HepG2 (cell line): ENCODE measurements at regions of chr4 and their contacts with region 1.

Region 1: GRCh38 chr4:98260579-98261290 is 449 bp upstream of the RAP1GDS1 start:
- DNase-seq: peak; percentile 89
- ATAC-seq: peak; percentile 90
- H3K4me3 ChIP-seq: peak overlapping the region; percentile 72 to 84 (median 73)
- H3K27ac ChIP-seq: peak overlapping the region; percentile 95
- H3K4me1 ChIP-seq: peaks cover 27% of the 10 kb centered on the region
- H3K27me3 ChIP-seq: no peaks in the 10 kb centered on the region; a peak in 1 of 5 replicates
- CTCF ChIP-seq: peak; percentile 22
- EP300 ChIP-seq: no peak
- POLR2A ChIP-seq: peak; percentile 80 to 86
- RAD21 ChIP-seq: peak; percentile 12; the same call in 1 of the 2 replicates

Region 2: DNA sequence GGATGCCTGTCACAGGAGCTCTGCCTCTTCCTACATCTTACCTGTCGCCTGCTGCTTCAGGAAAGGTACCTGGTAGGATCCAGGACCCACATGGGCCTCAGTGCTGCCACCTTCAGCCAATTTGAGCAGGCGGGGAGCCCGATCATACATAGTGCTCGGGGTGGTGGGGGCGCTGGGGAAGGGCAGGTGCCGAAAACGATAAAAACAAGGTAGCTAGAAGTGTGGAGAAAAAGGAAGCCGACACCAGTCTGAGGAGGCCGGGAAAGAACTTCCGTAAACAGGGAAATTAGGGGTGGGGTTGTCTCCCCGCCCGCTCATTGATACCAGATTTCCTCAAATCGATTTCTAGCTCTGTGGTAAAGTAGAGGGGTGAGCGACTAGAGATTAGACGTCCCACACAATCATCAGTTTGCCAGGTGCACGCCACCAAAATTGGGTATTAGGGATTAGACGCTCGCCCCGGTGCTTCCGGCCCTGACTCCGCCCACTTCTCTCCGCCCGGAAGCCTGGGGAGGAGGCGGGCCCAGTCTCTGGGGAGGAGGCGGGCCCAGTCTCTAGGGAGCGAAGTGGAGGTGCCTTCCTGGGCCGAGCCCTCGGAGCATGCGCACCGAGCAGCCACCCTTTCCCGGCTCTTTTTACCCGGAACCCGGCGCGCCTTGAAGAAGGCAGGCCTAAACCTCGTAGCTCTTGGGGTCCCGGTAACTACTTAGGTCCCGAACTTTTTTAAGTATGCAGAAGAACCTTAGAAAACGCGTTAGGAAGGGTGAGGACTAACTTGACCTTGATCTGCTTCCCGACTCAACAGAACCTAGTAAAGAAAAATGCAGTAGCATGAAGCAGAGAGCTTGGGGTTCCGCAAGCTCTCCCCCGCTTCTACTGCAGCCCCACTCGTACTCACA is 117.5 kb before region 1 on chr4 and contains the start of gene STPG2:
- CTCF ChIA-PET with region 1: no interaction called
- POLR2A ChIA-PET with region 1: interaction called, 31 read pairs
- in situ Hi-C with region 1: no loop called
- intact Hi-C with region 1: loop called (anchors 5 kb)
- DNase-seq: peak; percentile 79
- ATAC-seq: peak; percentile 100
- H3K4me3 ChIP-seq: peak within 1 kb of the TSS; percentile 75 to 83 (median 76)
- H3K27ac ChIP-seq: peak within 1 kb of the TSS; percentile 35
- H3K4me1 ChIP-seq: peaks cover 13% of the 10 kb centered on the region
- H3K27me3 ChIP-seq: no peaks in the 10 kb centered on the region; a peak in 1 of 5 replicates
- CTCF ChIP-seq: peak; percentile 52
- EP300 ChIP-seq: no peak
- POLR2A ChIP-seq: peak in 1 of 2 experiments; percentile 30; a peak in 1 of 4 replicates
- RAD21 ChIP-seq: no peak
- total RNA-seq, gene STPG2: 0.07 TPM in 1 of 2 replicates, not detected in the other

Region 3: GRCh38 chr4:98275145-98275544 is 14.4 kb after region 1 on chr4:
- CTCF ChIA-PET with region 1: no interaction called
- POLR2A ChIA-PET with region 1: interaction called, 10 read pairs
- in situ Hi-C with region 1: no loop called
- intact Hi-C with region 1: no loop called
- DNase-seq: no peak
- ATAC-seq: no peak
- H3K4me3 ChIP-seq: no peak overlapping the region
- H3K27ac ChIP-seq: no peak overlapping the region
- H3K4me1 ChIP-seq: peaks cover 6% of the 10 kb centered on the region; the same call in 1 of the 2 replicates
- H3K27me3 ChIP-seq: no peaks in the 10 kb centered on the region
- CTCF ChIP-seq: no peak
- EP300 ChIP-seq: no peak
- POLR2A ChIP-seq: no peak
- RAD21 ChIP-seq: no peak

Region 4: GRCh38 chr4:98284640-98285046 is 23.9 kb after region 1 on chr4:
- CTCF ChIA-PET with region 1: no interaction called
- POLR2A ChIA-PET with region 1: interaction called, 27 read pairs
- in situ Hi-C with region 1: no loop called
- intact Hi-C with region 1: no loop called
- DNase-seq: no peak
- ATAC-seq: no peak
- H3K4me3 ChIP-seq: no peak overlapping the region
- H3K27ac ChIP-seq: peak overlapping the region; percentile 17
- H3K4me1 ChIP-seq: peaks cover 27% of the 10 kb centered on the region
- H3K27me3 ChIP-seq: no peaks in the 10 kb centered on the region
- CTCF ChIP-seq: no peak
- EP300 ChIP-seq: no peak
- POLR2A ChIP-seq: no peak
- RAD21 ChIP-seq: no peak